Astrocyte of the cerebellum (primary cell): ENCODE measurements at regions of chr7 and their contacts with region 1.

Region 1: GRCh38 chr7:134690016-134690415 is 43.4 kb downstream of the BPGM start:
- DNase-seq: no peak
- H3K4me3 ChIP-seq: no peak overlapping the region
- CTCF ChIP-seq: peak; percentile 64

Region 2: DNA sequence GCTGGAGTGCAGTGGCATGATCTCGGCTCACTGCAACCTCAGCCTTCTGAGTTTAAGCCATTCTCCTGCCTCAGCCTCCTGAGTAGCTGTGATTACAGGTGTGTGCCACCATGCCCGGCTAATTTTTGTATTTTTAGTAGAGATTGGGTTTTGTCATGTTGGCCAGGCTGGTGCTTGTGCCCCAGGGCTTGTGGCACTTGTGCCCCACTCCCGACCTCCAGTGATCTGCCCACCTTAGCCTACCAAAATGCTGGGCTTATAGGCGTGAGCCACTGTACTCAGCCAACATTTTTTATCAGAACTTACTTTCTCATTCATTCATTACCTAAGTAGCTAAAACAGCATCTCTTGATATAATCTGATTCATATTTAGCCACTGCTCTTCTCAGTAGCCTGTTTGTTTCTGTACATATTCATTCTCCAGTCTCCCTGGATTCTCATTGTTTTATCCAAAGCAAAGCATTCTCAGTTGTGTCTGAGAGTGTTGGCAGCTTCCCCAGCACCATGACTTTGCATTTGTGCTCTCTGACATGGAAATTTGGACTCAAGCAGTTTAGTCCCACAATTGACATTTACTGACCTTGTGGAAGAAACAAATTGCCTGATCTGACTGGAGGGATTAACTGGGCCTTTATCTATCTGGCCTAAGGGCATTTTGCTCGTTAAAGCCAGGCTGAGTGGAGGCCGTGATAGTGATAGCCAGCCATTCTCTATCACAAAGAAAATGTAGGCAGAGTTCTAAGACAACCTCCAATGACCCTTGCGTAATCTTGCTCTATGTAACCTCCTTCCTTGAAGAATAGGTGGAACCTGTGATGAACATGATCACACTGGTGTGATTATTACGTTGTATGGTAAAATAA is 96.3 kb before region 1 on chr7:
- in situ Hi-C with region 1: no loop called
- DNase-seq: peak; percentile 75
- H3K4me3 ChIP-seq: no peak overlapping the region
- CTCF ChIP-seq: no peak

Region 3: DNA sequence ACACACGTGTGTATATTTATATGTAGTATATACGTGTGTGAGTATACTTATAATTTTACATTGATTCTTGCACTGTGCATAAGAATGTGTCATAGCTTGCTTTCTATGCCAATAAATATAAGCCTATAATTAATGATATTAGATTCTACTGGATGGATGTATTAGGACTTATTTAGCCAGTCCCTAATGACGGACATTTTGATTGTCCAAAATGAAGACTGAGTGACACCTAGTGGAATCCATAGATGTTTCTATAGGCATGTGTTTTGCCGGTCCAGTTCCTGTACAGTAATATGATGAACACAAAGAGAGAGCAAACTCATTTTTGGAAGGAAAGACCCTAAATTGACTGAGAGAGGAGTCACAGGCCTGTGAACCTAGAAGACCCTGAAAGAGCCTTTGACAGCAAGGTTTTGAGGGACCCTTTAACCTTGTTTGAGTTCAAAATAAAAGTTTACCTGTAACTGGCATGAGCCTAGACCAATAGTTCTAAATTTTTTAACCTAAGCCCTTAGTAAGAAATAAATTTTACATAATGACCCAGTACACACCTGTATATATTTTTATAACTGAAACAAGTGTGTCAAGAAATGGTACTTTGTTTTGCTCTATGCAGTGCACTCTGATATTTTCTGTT is 253.9 kb after region 1 on chr7:
- in situ Hi-C with region 1: loop called (anchors 10 kb)
- DNase-seq: no peak
- H3K4me3 ChIP-seq: no peak overlapping the region
- CTCF ChIP-seq: peak; percentile 18